K562 (cell line): ENCODE measurements at regions of chr6 and their contacts with region 1.

Region 1: GRCh38 chr6:150079604-150080003 is 10.7 kb upstream of the ULBP3 start:
- DNase-seq: no peak
- ATAC-seq: peak; percentile 52
- H3K4me3 ChIP-seq: no peak overlapping the region
- H3K27ac ChIP-seq: no peak overlapping the region
- H3K4me1 ChIP-seq: no peaks in the 10 kb centered on the region; a peak in 2 of 5 replicates
- H3K27me3 ChIP-seq: peaks cover 18 to 20% of the 10 kb centered on the region in 2 experiments
- CTCF ChIP-seq: no peak
- EP300 ChIP-seq: no peak
- POLR2A ChIP-seq: no peak
- RAD21 ChIP-seq: no peak

Region 2: GRCh38 chr6:150184850-150185731 is 105.5 kb after region 1 on chr6:
- CTCF ChIA-PET with region 1: no interaction called
- POLR2A ChIA-PET with region 1: no interaction called
- in situ Hi-C with region 1: no loop called
- intact Hi-C with region 1: loop called (anchors 5 kb)
- DNase-seq: no peak
- ATAC-seq: peak; percentile 23
- H3K4me3 ChIP-seq: no peak overlapping the region
- H3K27ac ChIP-seq: no peak overlapping the region
- H3K4me1 ChIP-seq: peaks cover 15 to 32% of the 10 kb centered on the region in 2 experiments; a peak in 4 of 5 replicates
- H3K27me3 ChIP-seq: no peaks in the 10 kb centered on the region
- CTCF ChIP-seq: no peak
- EP300 ChIP-seq: no peak
- POLR2A ChIP-seq: no peak
- RAD21 ChIP-seq: no peak

Region 3: GRCh38 chr6:150220634-150221551 is 141.3 kb after region 1 on chr6:
- CTCF ChIA-PET with region 1: no interaction called
- POLR2A ChIA-PET with region 1: no interaction called
- in situ Hi-C with region 1: no loop called
- intact Hi-C with region 1: no loop called
- DNase-seq: no peak
- ATAC-seq: peak; percentile 64
- H3K4me3 ChIP-seq: no peak overlapping the region
- H3K27ac ChIP-seq: no peak overlapping the region; the same call in 2 of the 3 replicates
- H3K4me1 ChIP-seq: peaks cover 0 to 15% of the 10 kb centered on the region in 2 experiments; a peak in 3 of 5 replicates
- H3K27me3 ChIP-seq: no peaks in the 10 kb centered on the region
- CTCF ChIP-seq: no peak
- EP300 ChIP-seq: peak; percentile 59; the same call in 1 of the 2 replicates
- POLR2A ChIP-seq: no peak
- RAD21 ChIP-seq: 0 out of 4 replicates have a peak, but pooled peaks of 1 of the 2 experiments have one; percentile 4